CD8-positive, alpha-beta T cell (primary cell): ENCODE measurements at regions of chr7 and their contacts with region 1.

Region 1: DNA sequence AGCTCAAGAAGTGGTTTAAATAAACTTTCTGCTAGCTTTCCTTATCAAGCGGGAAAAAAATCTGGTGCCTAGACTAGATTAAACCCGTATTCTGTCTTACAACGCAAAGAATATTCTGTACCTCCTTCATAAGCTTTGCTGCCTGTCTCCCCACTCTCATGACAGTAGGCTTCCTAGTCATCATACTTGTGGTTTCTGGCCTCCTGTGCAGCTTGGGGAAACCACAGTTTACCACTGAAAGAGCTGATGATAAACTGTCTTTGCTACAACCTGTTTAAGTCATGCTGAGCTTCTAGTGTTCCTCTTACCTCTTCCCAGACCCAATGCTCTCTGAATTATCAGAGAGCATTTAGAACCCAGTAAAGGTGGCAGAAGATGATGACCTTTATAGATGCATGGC is 55.0 kb downstream of the PODXL start:
- DNase-seq: peak in 8 of 9 experiments; percentile 33 to 73 (median 57)
- ATAC-seq: peak; percentile 94
- H3K4me3 ChIP-seq: no peak overlapping the region
- H3K4me3 Mint-ChIP-seq: no peak overlapping the region
- H3K27ac ChIP-seq: peak overlapping the region in 1 of 2 experiments; percentile 3
- H3K27ac Mint-ChIP-seq: peak overlapping the region; percentile 81
- H3K4me1 ChIP-seq: peaks cover 19% of the 10 kb centered on the region
- H3K4me1 Mint-ChIP-seq: peaks cover 33% of the 10 kb centered on the region
- H3K27me3 ChIP-seq: no peaks in the 10 kb centered on the region
- H3K27me3 Mint-ChIP-seq: no peaks in the 10 kb centered on the region
- CTCF ChIP-seq: no peak

Region 2: DNA sequence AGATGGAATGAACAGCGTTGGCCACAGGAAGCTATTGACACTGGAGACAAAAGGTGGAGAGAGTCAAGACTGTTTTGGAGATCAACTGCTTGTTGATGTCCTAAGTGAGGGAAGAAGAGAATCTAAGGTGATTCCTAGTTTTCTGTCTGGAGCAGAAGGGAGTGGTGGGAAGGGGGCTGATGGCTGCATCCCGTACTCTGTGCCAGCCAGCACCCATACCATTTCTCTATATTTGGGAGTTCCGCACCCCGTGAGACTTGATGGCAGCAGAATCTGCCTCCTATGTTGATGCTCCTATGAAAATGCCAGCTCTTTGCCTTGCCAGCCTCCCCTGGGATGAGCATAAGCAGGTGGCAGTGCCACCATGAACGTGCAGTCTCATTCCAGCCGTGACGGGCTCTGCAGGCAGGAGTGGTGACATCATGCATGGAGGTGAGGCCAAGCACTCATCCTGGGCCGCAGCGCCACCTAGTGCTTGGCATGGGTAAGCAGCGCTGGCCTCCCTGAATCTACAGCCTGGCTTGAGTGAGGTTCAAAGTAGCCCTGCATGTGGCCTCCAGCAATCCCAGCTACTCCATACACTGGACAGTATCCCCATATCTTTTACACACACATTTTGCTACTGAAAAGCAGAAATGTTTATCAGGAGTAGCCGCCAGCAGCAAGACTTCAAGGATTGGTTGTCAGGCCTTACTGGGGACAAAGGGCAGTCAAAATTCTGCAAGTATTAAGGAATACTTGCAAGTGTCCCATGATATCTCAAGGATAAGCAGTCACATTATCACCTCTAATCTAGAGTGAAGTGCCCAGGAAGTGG is 12.0 kb after region 1 on chr7:
- CTCF ChIA-PET with region 1: interaction called, 67 read pairs
- POLR2A ChIA-PET with region 1: interaction called, 3 read pairs
- intact Hi-C with region 1: no loop called
- DNase-seq: peak; percentile 42 to 82 (median 77)
- ATAC-seq: peak; percentile 100
- H3K4me3 ChIP-seq: no peak overlapping the region
- H3K4me3 Mint-ChIP-seq: no peak overlapping the region
- H3K27ac ChIP-seq: no peak overlapping the region
- H3K27ac Mint-ChIP-seq: no peak overlapping the region
- H3K4me1 ChIP-seq: peaks cover 9% of the 10 kb centered on the region
- H3K4me1 Mint-ChIP-seq: peaks cover 20% of the 10 kb centered on the region
- H3K27me3 ChIP-seq: no peaks in the 10 kb centered on the region
- H3K27me3 Mint-ChIP-seq: peaks cover 9% of the 10 kb centered on the region
- CTCF ChIP-seq: peak; percentile 74